HepG2 (cell line): ENCODE measurements at regions of chr3 and their contacts with region 1.

Region 1: GRCh38 chr3:2765002-2765579 is 345.1 kb downstream of the IL5RA start:
- DNase-seq: peak; percentile 9
- ATAC-seq: peak; percentile 77
- H3K4me3 ChIP-seq: no peak overlapping the region
- H3K27ac ChIP-seq: no peak overlapping the region
- H3K4me1 ChIP-seq: no peaks in the 10 kb centered on the region
- H3K27me3 ChIP-seq: no peaks in the 10 kb centered on the region
- CTCF ChIP-seq: peak; percentile 36
- EP300 ChIP-seq: no peak
- POLR2A ChIP-seq: no peak
- RAD21 ChIP-seq: no peak

Region 2: GRCh38 chr3:2697589-2697988 is 67.5 kb before region 1 on chr3:
- CTCF ChIA-PET with region 1: no interaction called
- POLR2A ChIA-PET with region 1: no interaction called
- in situ Hi-C with region 1: no loop called
- intact Hi-C with region 1: no loop called
- DNase-seq: no peak
- ATAC-seq: no peak
- H3K4me3 ChIP-seq: no peak overlapping the region
- H3K27ac ChIP-seq: no peak overlapping the region
- H3K4me1 ChIP-seq: no peaks in the 10 kb centered on the region
- H3K27me3 ChIP-seq: no peaks in the 10 kb centered on the region
- CTCF ChIP-seq: no peak
- EP300 ChIP-seq: no peak
- POLR2A ChIP-seq: no peak
- RAD21 ChIP-seq: no peak

Region 3: GRCh38 chr3:2839876-2840275 is 74.8 kb after region 1 on chr3:
- CTCF ChIA-PET with region 1: no interaction called
- POLR2A ChIA-PET with region 1: no interaction called
- in situ Hi-C with region 1: no loop called
- intact Hi-C with region 1: no loop called
- DNase-seq: no peak
- ATAC-seq: no peak
- H3K4me3 ChIP-seq: no peak overlapping the region
- H3K27ac ChIP-seq: no peak overlapping the region
- H3K4me1 ChIP-seq: no peaks in the 10 kb centered on the region
- H3K27me3 ChIP-seq: no peaks in the 10 kb centered on the region; a peak in 3 of 5 replicates
- CTCF ChIP-seq: no peak
- EP300 ChIP-seq: no peak
- POLR2A ChIP-seq: no peak
- RAD21 ChIP-seq: no peak

Region 4: GRCh38 chr3:2921903-2922302 is 156.8 kb after region 1 on chr3:
- CTCF ChIA-PET with region 1: no interaction called
- POLR2A ChIA-PET with region 1: no interaction called
- in situ Hi-C with region 1: no loop called
- intact Hi-C with region 1: loop called (anchors 10 kb)
- DNase-seq: peak; percentile 5
- ATAC-seq: peak; percentile 64; the same call in 2 of the 3 replicates
- H3K4me3 ChIP-seq: no peak overlapping the region
- H3K27ac ChIP-seq: no peak overlapping the region
- H3K4me1 ChIP-seq: no peaks in the 10 kb centered on the region
- H3K27me3 ChIP-seq: no peaks in the 10 kb centered on the region
- CTCF ChIP-seq: peak; percentile 32; the same call in 1 of the 2 replicates
- EP300 ChIP-seq: no peak
- POLR2A ChIP-seq: no peak
- RAD21 ChIP-seq: no peak